ENCODE measurements at regions of chr22 and their contacts with region 1.

Region 1: DNA sequence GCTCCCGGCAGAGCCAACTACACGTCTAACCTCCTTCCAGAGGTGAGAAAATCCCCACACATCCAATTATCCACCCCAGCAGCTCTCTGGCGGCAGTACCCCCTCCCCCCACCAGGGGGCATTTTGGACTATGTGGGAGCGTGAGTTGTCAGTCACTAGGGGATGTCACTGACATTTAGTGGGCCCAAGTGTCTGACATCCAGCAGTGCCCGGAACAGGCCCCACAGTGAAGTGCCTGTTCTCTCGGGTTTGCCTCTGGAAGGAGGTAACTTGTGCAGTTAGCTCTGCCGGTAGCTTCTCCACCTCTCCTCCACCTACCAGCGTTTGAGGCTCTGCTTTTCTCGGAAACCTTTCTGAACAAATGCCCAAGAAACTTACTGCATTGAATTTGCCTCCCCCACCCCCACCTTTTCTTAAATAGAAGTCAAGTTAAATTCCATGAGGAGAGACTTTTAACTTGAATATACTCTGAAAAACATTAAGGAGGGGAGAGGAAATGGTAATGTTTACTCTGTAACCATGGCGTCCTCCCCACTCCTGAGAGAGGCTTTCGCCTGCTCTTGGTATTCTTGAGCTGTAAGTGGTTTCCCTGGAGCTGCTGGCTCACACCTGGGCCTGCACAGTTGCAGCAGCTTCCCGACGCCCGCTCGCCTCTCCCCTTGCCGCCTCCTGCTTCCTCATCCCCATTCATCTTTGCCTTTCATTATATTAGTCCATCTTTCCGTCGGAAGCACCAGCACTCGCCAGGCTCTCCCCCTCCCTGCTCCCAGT is 112.8 kb downstream of the WNT7B start:
- DNase-seq: peak in 1 of 2 experiments; percentile 96
- H3K4me3 ChIP-seq: no peak overlapping the region
- H3K27ac ChIP-seq: no peak overlapping the region
- H3K4me1 ChIP-seq: peaks cover 0 to 8% (median 1%) of the 10 kb centered on the region in 4 experiments; a peak in 5 of 7 replicates
- H3K27me3 ChIP-seq: peaks cover 25 to 48% (median 44%) of the 10 kb centered on the region in 4 experiments
- CTCF ChIP-seq: peak; percentile 82 to 91 (median 86)
- EP300 ChIP-seq: no peak
- POLR2A ChIP-seq: no peak
- RAD21 ChIP-seq: peak; percentile 59 to 76

Region 2: GRCh38 chr22:45602824-45603630 is 261.1 kb before region 1 on chr22:
- CTCF ChIA-PET with region 1: interaction called, 11 read pairs
- POLR2A ChIA-PET with region 1: no interaction called
- DNase-seq: peak in 1 of 2 experiments; percentile 73
- H3K4me3 ChIP-seq: no peak overlapping the region
- H3K27ac ChIP-seq: no peak overlapping the region
- H3K4me1 ChIP-seq: peaks cover 0 to 6% (median 2%) of the 10 kb centered on the region in 4 experiments; a peak in 3 of 7 replicates
- H3K27me3 ChIP-seq: no peaks in the 10 kb centered on the region
- CTCF ChIP-seq: no peak
- EP300 ChIP-seq: no peak
- POLR2A ChIP-seq: no peak
- RAD21 ChIP-seq: no peak

Region 3: DNA sequence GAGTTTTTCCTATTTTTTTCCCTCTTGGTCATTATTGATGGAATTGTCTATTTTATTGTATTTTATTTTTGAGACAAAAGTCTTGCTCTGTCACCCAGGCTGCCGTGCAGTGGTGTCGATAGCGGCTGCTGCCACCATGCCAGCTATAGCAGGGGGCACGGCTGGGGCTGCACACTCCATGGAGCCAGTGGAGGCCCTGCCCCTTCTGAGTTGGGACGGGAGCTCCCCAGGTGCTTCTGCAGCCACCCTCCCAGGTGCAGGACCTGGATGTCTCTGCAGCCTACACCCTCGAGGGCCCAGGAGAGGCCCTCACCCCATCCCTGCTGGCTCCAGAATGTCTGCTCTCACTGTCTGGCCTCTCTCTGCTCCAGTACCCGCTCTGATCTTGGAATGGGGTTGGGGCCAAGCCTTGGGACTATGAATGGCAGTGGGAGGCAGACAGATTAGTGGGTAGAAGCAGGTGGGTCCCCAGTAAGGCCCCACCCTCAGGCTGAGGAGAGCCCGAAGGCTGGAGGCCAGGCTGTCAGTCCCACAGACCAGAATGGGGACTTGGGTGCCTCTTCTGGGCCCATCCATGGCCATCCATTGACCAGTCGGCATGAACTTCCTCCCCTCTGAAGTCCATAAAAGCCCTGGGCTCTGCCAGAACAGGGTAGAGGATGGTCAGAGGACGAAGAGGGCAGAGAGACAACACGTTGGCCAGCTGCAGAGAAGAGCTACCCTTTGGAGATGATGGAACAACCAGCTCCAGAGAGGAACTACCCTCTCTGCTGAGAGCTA is 242.2 kb before region 1 on chr22:
- CTCF ChIA-PET with region 1: no interaction called
- POLR2A ChIA-PET with region 1: no interaction called
- DNase-seq: no peak
- H3K4me3 ChIP-seq: no peak overlapping the region
- H3K27ac ChIP-seq: no peak overlapping the region
- H3K4me1 ChIP-seq: peaks cover 1 to 3% (median 3%) of the 10 kb centered on the region in 4 experiments; a peak in 4 of 7 replicates
- H3K27me3 ChIP-seq: no peaks in the 10 kb centered on the region
- CTCF ChIP-seq: no peak
- EP300 ChIP-seq: no peak
- POLR2A ChIP-seq: no peak
- RAD21 ChIP-seq: no peak

Region 4: GRCh38 chr22:45757068-45757467 is 107.1 kb before region 1 on chr22:
- CTCF ChIA-PET with region 1: interaction called, 12 read pairs
- POLR2A ChIA-PET with region 1: no interaction called
- DNase-seq: peak; percentile 58
- H3K4me3 ChIP-seq: no peak overlapping the region; a peak in 1 of 8 replicates
- H3K27ac ChIP-seq: no peak overlapping the region
- H3K4me1 ChIP-seq: peaks cover 0 to 17% (median 6%) of the 10 kb centered on the region in 4 experiments; a peak in 6 of 7 replicates
- H3K27me3 ChIP-seq: no peaks in the 10 kb centered on the region
- CTCF ChIP-seq: peak in 1 of 3 experiments; percentile 17; a peak in 1 of 4 replicates
- EP300 ChIP-seq: no peak
- POLR2A ChIP-seq: no peak
- RAD21 ChIP-seq: peak in 1 of 2 experiments; percentile 26; a peak in 1 of 4 replicates

Region 5: GRCh38 chr22:45842291-45842991 is 21.7 kb before region 1 on chr22:
- CTCF ChIA-PET with region 1: interaction called, 26 read pairs
- POLR2A ChIA-PET with region 1: no interaction called
- DNase-seq: no peak
- H3K4me3 ChIP-seq: no peak overlapping the region
- H3K27ac ChIP-seq: no peak overlapping the region
- H3K4me1 ChIP-seq: peaks cover 4 to 26% (median 17%) of the 10 kb centered on the region in 4 experiments; a peak in 6 of 7 replicates
- H3K27me3 ChIP-seq: no peaks in the 10 kb centered on the region
- CTCF ChIP-seq: no peak
- EP300 ChIP-seq: no peak
- POLR2A ChIP-seq: no peak
- RAD21 ChIP-seq: no peak

Region 6: GRCh38 chr22:45878051-45878781 is 14.1 kb after region 1 on chr22:
- CTCF ChIA-PET with region 1: interaction called, 78 read pairs
- POLR2A ChIA-PET with region 1: interaction called, 4 read pairs
- DNase-seq: peak in 1 of 2 experiments; percentile 68
- H3K4me3 ChIP-seq: peak overlapping the region in 1 of 4 experiments; percentile 35; a peak in 1 of 8 replicates
- H3K27ac ChIP-seq: no peak overlapping the region
- H3K4me1 ChIP-seq: peaks cover 0 to 28% (median 22%) of the 10 kb centered on the region in 4 experiments; a peak in 6 of 7 replicates
- H3K27me3 ChIP-seq: peaks cover 0 to 50% (median 30%) of the 10 kb centered on the region in 4 experiments; a peak in 6 of 7 replicates
- CTCF ChIP-seq: no peak
- EP300 ChIP-seq: no peak
- POLR2A ChIP-seq: no peak
- RAD21 ChIP-seq: no peak

Region 7: DNA sequence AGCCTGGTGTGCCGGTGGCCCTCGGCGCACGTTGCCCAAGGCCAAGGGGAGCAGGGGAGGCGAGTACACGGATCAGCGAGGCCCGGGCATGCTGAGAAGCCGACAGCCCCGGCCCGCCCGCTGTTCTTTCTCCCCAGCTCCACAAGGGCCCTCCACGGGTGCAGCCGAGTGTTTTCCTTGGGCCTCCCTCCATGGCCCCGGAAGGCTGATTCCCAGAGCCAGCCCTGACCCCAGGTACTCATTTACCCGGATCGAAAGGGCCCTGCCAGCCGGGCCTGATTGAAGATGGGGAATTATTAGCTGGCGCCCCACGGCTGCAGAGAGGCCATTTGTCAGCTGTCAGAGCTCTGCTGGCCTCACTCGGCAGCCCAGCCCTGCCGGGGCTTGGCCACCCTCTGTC is 59.7 kb after region 1 on chr22:
- CTCF ChIA-PET with region 1: interaction called, 13 read pairs
- POLR2A ChIA-PET with region 1: no interaction called
- DNase-seq: no peak
- H3K4me3 ChIP-seq: no peak overlapping the region
- H3K27ac ChIP-seq: no peak overlapping the region
- H3K4me1 ChIP-seq: no peaks in the 10 kb centered on the region; a peak in 1 of 7 replicates
- H3K27me3 ChIP-seq: no peaks in the 10 kb centered on the region
- CTCF ChIP-seq: no peak
- EP300 ChIP-seq: no peak
- POLR2A ChIP-seq: no peak
- RAD21 ChIP-seq: no peak

Region 8: DNA sequence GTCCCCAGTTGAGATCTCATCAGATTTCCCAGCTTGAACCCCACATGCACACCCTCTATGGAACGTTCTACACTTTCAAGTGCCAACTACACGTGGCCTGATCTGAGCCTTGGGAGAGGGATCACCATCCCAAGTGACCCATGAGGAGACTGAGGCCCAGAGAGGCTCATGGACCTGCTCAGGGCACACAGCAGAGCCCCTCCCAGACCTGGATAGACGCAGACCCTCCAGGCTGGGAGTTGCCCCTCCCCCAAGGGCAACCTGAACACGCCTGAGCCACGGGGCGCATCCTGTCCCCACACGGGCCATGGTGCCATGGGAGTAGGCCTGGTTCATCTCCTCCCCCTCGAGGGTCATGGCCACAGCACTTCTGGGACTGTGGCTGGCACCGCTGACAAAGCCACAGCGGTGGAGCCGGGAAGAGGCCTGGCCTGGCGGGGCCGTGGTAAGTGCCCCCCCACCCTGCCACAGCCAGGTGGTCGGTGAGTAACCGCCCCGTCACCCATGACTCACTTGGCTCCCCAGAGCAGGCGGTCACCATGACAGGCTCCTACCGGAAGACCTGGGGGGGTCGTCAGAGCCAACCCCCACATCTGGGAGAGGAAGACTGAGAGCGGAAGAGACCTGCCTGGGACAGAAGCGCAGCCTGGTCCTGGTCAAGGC is 104.7 kb after region 1 on chr22:
- CTCF ChIA-PET with region 1: interaction called, 25 read pairs
- POLR2A ChIA-PET with region 1: no interaction called
- DNase-seq: no peak
- H3K4me3 ChIP-seq: no peak overlapping the region
- H3K27ac ChIP-seq: no peak overlapping the region
- H3K4me1 ChIP-seq: peaks cover 0 to 50% (median 35%) of the 10 kb centered on the region in 4 experiments; a peak in 6 of 7 replicates
- H3K27me3 ChIP-seq: peaks cover 38 to 77% (median 67%) of the 10 kb centered on the region in 4 experiments
- CTCF ChIP-seq: no peak
- EP300 ChIP-seq: no peak
- POLR2A ChIP-seq: no peak
- RAD21 ChIP-seq: no peak

Region 9: DNA sequence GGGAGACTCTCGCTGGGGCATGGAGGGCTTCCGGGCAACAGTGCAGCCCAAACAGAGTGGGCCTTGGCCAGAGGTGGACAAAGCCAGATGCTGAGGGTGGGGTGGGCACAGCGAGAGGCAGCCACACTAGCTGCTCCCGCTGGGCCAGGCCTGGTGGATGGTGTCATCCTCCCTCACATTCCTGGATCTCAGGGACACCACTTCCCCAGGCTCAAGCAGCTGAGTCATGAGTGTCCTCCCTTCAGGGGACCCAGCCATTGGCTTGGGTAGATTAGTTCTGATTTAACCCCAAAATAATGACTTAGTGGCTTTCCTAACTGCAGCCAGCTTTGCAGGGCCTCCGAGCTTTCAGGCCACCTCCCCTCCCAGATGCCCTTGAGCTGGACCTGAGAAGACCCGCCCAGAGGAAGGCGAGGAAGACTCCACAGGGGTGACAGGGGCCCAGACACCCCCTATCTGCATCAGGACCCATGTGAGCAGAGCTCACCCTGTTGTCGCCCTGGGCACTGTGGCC is 138.6 kb after region 1 on chr22:
- CTCF ChIA-PET with region 1: no interaction called
- POLR2A ChIA-PET with region 1: no interaction called
- DNase-seq: no peak
- H3K4me3 ChIP-seq: no peak overlapping the region
- H3K27ac ChIP-seq: no peak overlapping the region
- H3K4me1 ChIP-seq: peaks cover 0 to 2% (median 0%) of the 10 kb centered on the region in 4 experiments; a peak in 2 of 7 replicates
- H3K27me3 ChIP-seq: no peaks in the 10 kb centered on the region
- CTCF ChIP-seq: no peak
- EP300 ChIP-seq: no peak
- POLR2A ChIP-seq: no peak
- RAD21 ChIP-seq: no peak

Measured in H1 (cell line).